PC-3 (cell line): ENCODE measurements at regions of chr5 and their contacts with region 1.

Region 1: GRCh38 chr5:176660860-176661641 is 13.8 kb downstream of the TSPAN17 start:
- DNase-seq: peak; percentile 82
- ATAC-seq: peak; percentile 92
- H3K4me3 ChIP-seq: no peak overlapping the region
- H3K27ac ChIP-seq: no peak overlapping the region
- H3K4me1 ChIP-seq: no peaks in the 10 kb centered on the region
- H3K27me3 ChIP-seq: no peaks in the 10 kb centered on the region
- CTCF ChIP-seq: peak; percentile 92

Region 2: GRCh38 chr5:176616511-176616910 is 44.5 kb before region 1 on chr5:
- CTCF ChIA-PET with region 1: interaction called, 14 read pairs
- POLR2A ChIA-PET with region 1: no interaction called
- intact Hi-C with region 1: no loop called
- DNase-seq: no peak
- ATAC-seq: no peak
- H3K4me3 ChIP-seq: no peak overlapping the region
- H3K27ac ChIP-seq: no peak overlapping the region
- H3K4me1 ChIP-seq: peaks cover 26% of the 10 kb centered on the region
- H3K27me3 ChIP-seq: peaks cover 18% of the 10 kb centered on the region
- CTCF ChIP-seq: no peak

Region 3: DNA sequence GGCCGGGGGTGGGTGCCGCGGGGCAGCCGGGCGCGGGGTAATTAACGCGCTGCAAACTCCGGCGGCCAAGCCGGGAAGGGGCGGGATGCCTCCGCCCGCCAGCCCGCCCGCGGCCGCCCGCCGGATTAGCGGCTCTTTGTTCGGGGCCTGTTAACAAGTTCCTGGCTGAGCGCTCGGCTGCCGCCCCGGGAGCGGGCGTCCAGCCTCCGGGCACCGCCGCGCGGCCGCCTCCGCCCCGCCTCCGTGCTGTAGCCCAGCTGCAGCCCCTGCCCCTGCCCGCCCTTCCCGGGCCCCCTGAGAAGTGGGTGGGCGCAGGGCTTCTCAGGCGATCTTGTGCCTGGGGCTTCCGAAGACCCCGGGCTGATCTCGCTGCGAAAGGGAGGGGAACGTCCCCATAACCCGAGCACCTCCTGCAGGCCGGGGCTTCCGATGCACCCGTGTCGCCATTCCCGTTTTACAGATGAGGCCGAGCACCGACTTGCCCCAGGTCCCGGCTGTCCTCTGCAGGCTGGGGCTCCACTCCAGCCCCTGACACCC is 156.9 kb after region 1 on chr5:
- CTCF ChIA-PET with region 1: no interaction called
- POLR2A ChIA-PET with region 1: no interaction called
- intact Hi-C with region 1: loop called (anchors 10 kb)
- DNase-seq: peak; percentile 37
- ATAC-seq: peak; percentile 35
- H3K4me3 ChIP-seq: peak overlapping the region; percentile 68
- H3K27ac ChIP-seq: no peak overlapping the region
- H3K4me1 ChIP-seq: peaks cover 17% of the 10 kb centered on the region
- H3K27me3 ChIP-seq: no peaks in the 10 kb centered on the region
- CTCF ChIP-seq: peak; percentile 67

Region 4: GRCh38 chr5:176959051-176959450 is 298.0 kb after region 1 on chr5:
- CTCF ChIA-PET with region 1: no interaction called
- POLR2A ChIA-PET with region 1: no interaction called
- intact Hi-C with region 1: loop called (anchors 2 kb)
- DNase-seq: peak; percentile 61
- ATAC-seq: peak; percentile 55
- H3K4me3 ChIP-seq: no peak overlapping the region
- H3K27ac ChIP-seq: no peak overlapping the region
- H3K4me1 ChIP-seq: no peaks in the 10 kb centered on the region
- H3K27me3 ChIP-seq: no peaks in the 10 kb centered on the region
- CTCF ChIP-seq: peak; percentile 62

Region 5: GRCh38 chr5:177094224-177095087 is 433.4 kb after region 1 on chr5:
- CTCF ChIA-PET with region 1: no interaction called
- POLR2A ChIA-PET with region 1: no interaction called
- intact Hi-C with region 1: no loop called
- DNase-seq: no peak
- ATAC-seq: no peak
- H3K4me3 ChIP-seq: no peak overlapping the region
- H3K27ac ChIP-seq: no peak overlapping the region
- H3K4me1 ChIP-seq: no peaks in the 10 kb centered on the region
- H3K27me3 ChIP-seq: no peaks in the 10 kb centered on the region
- CTCF ChIP-seq: no peak